Left lung (tissue), 14 donors: ENCODE measurements at regions of chrX and their contacts with region 1.

Region 1: DNA sequence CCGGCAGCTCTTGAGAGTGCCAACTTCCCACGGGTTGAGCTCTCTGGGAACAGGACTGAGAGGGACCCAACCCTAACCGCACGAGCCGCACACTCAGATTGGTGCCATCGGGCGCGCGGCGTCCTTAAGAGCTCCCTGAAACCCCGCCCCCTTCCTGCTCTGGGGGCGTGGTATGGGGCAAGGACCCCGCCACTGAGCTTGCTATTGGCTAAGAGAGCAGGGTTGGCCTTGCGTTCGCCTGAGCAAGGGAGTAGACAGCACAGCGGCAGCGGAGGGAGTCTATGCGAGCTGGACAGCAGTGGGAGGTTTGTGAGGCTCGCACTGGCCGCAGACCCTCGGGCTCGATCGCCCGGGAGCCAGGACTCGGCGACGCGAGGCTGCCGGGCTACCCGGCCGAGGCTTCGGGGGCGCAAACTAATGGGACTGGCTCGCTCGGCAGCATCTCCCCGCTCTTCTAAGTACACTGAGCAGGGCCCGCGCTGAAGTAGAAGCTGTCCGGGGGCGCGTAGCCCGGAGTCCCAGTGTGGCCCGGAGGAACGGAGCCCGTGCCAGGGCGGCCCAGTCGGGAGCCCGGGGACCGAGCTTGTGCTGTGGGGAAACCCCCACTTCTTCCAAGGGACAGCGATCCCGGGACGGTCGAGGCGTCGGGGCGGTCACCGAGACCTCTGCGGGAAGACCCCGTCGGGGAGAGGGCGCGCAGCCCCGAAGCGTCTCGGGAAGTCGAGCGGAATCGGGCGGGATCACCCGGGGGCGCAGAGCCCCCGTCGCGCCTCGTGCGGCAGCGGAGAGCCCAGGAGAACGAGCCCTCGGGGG is at the start of gene EFNB1:
- DNase-seq: peak; percentile 85 to 95 (median 92)
- ATAC-seq: peak; percentile 92
- H3K4me3 ChIP-seq: peak within 1 kb of the TSS; percentile 54 to 67
- H3K27ac ChIP-seq: peak within 1 kb of the TSS; percentile 53 to 76
- H3K4me1 ChIP-seq: peaks cover 0 to 13% of the 10 kb centered on the region in 2 donors
- H3K27me3 ChIP-seq: peaks cover 0 to 17% of the 10 kb centered on the region in 2 donors
- CTCF ChIP-seq: no peak
- polyA plus RNA-seq, gene EFNB1: 50.0 to 69.9 (median 63.1) TPM

Region 2: DNA sequence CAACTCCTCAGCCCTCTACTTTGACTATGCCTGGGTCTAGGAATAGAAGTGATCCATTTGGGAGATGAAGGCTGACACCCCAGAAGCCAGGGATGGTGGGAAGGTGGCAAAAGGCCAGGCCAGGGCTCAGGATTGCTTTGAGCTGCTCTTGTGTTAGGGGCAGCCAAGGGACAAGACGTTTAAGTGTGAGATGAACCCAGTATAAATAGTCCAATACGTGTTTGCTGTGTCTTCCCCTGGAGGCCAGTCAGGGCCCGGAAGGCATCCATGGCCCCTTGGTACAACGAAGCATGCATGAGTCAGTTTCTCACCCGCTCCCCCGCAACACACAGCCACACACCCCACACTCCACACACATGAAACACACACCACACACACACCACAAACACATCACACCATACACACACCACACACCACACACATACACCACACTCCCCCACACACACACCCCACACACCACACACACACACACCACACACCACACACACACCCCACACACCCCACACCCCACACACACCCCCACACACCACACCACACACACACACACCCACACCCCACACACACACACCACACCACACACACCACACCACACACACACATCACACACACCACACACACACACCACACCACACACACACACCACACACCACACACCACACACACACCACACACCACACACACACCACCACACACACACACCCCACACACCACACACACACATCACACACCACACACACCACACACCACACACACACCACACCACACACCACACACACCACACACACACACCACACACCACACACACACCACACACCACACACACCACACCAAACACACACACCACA is 176.4 kb before region 1 on chrX:
- intact Hi-C with region 1: no loop called
- DNase-seq: peak in 1 of 4 donors; percentile 54
- ATAC-seq: no peak
- H3K4me3 ChIP-seq: no peak overlapping the region
- H3K27ac ChIP-seq: no peak overlapping the region
- H3K4me1 ChIP-seq: no peaks in the 10 kb centered on the region
- H3K27me3 ChIP-seq: peaks cover 0 to 5% of the 10 kb centered on the region in 2 donors
- CTCF ChIP-seq: no peak

Region 3: DNA sequence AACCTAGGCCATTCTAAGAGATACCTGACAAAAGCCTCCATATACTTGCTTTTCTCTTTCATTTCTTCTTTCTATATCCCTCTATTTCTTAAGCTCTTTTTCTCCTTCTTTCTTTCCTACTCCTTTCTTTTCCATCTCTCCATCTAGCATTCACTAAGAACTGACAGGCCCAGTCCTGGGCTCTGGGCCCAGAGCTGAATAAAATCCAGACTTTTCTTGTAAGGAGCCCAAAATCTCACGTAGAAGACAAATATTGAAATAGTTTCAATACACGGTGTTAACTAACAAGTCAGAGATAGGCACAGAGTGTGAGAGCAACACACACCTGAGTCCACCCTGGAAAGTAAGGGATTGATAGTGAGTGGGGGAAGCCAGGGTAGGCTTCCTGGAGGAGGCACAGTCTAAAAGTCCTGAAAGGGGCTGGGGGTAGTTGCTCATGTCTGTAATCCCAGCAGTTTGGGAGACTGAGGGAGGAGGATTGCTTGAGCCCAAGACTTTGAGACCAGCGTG is 73.3 kb before region 1 on chrX:
- intact Hi-C with region 1: no loop called
- DNase-seq: no peak
- ATAC-seq: no peak
- H3K4me3 ChIP-seq: no peak overlapping the region
- H3K27ac ChIP-seq: no peak overlapping the region
- H3K4me1 ChIP-seq: no peaks in the 10 kb centered on the region
- H3K27me3 ChIP-seq: no peaks in the 10 kb centered on the region
- CTCF ChIP-seq: no peak

Region 4: DNA sequence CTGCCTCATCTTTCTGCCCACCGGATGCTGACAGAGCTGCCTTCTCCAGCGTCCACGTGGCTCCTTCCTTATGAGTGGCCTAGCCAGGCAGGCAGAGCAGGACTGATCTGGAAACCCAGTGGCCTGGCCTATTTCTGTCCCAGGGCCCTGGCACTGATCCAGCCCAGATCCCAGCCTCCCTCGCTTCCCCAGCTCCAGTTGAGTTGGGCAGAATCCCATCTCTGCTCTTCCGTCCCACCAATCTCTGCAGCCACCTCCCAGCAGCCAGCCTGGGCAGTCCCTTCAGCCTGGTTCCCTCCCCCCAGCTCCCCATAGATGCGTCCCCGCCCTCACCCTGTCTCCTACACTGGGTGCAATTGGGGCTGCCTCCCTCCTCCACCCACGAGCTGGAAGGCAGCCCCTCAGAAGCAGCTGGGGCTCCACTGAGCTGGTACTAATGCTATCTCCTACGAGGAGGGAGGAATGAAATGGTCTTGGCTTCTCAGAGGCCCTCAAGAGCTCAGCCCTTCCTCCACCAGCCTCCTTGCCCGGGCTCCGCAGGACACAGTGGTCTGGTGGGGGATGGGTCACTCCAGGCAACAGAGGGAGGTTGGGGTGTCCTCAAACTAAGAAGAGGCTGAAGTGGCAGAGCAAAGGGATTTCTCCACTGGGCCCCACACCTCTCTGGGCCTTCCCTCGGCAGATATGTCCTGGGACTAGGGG is 242.2 kb after region 1 on chrX:
- intact Hi-C with region 1: no loop called
- DNase-seq: peak in 1 of 4 donors; percentile 70
- ATAC-seq: peak; percentile 18
- H3K4me3 ChIP-seq: no peak overlapping the region
- H3K27ac ChIP-seq: no peak overlapping the region
- H3K4me1 ChIP-seq: no peaks in the 10 kb centered on the region
- H3K27me3 ChIP-seq: no peaks in the 10 kb centered on the region
- CTCF ChIP-seq: no peak

Region 5: DNA sequence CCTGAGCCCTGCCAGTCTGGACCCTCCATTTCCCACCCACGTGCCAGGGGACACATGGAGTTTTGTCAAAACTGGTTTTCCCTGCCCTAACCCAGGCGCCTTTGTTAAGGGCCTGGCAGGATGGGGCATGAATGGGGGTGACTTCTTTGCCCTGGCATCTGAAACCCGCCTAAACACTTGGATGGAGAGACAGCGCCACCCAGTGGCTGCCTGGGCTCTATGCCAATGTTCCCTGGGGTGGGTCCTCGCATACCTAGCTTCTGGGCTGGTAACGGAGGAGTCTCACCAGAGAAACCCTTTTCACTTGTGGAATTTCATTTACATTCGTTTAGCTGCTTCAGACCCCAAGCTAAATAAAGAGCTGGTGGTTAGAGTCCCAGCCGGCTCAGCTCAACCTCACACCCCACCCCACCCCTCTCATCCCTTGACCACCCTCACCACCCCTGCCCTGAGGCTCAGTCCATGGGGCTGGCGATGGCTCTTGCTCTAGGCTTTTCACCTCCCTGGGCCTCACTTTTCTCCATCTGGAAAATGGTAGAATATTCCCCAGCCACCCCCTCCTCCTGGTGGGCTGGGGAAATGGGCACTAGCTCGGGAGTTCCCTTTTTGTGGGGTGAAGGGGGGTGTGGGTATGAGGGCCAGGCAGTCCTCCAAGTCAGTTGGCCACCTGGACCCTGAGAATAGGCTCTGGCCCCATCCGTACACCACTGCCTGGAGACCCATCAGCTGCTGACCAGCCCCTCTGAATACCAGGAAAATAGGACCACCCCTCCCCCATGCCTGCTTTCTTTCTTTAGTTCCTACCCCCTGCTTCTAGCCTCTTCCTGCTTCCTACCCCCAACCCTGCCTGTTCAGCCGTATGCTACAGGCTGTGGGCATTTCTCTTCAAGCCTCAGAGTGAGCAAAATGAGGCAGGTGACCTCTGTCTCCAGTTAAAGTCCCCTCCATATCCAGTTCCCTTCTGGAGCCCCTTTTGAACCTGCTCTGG is 393.5 kb after region 1 on chrX:
- intact Hi-C with region 1: loop called in 1 of 2 experiments (anchors 10 kb)
- DNase-seq: peak; percentile 42 to 78 (median 71)
- ATAC-seq: peak; percentile 89
- H3K4me3 ChIP-seq: no peak overlapping the region
- H3K27ac ChIP-seq: no peak overlapping the region
- H3K4me1 ChIP-seq: no peaks in the 10 kb centered on the region
- H3K27me3 ChIP-seq: peaks cover 0 to 10% of the 10 kb centered on the region in 2 donors
- CTCF ChIP-seq: peak; percentile 59 to 67

Region 6: GRCh38 chrX:69285881-69286564 is 457.1 kb after region 1 on chrX:
- intact Hi-C with region 1: loop called in 1 of 2 experiments (anchors 10 kb)
- DNase-seq: peak; percentile 55 to 85 (median 80)
- ATAC-seq: peak; percentile 85
- H3K4me3 ChIP-seq: peak overlapping the region in 1 of 2 donors; percentile 14
- H3K27ac ChIP-seq: no peak overlapping the region
- H3K4me1 ChIP-seq: peaks cover 3% of the 10 kb centered on the region in 2 donors
- H3K27me3 ChIP-seq: no peaks in the 10 kb centered on the region
- CTCF ChIP-seq: peak; percentile 78 to 89

Region 7: DNA sequence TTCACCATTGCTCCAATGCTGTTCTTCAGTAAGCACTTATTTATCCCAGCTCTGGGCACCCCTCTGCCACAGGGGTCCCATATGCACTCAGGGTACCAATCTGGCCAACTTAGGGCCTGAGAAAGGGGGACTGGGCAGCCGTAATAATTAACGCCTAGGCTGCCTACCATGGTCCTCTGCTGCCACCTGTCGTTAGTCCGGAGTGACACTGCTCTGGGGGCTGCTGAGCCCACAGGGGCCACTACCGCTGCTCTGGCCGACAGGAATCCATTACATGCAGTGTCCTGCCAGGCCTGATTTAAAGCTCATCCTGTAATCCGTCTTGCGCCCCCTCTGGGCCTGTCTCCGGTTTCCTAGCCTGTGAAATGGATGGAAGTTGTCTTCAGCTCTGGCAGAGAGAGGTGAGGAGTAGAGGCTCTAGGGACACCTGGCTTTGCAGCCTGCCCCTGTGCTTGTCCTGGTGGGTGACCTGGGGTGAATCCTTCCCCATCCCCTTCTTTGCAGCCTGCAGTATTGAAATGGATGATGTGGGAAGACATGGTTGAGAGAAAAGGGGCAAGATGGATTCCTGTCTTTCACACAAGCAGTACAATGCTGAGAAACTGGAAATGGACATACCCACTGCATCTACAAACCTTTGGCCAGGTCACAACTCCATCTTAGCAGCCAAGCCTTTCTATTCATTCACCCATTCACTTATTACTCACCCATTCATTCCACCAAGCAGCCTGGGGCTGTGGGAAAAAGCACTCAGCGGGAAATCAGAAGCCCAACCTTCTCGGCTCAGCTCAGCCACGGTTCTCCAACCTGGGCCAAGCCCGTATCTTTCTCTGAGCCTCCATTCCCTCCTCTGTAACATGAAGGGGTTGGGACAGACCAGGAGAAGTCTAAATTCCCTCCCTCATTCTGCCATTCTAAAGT is 558.9 kb after region 1 on chrX:
- intact Hi-C with region 1: loop called in 1 of 2 experiments (anchors 10 kb)
- DNase-seq: peak in 3 of 4 donors; percentile 37 to 67 (median 49)
- ATAC-seq: peak; percentile 84
- H3K4me3 ChIP-seq: no peak overlapping the region
- H3K27ac ChIP-seq: no peak overlapping the region
- H3K4me1 ChIP-seq: no peaks in the 10 kb centered on the region
- H3K27me3 ChIP-seq: no peaks in the 10 kb centered on the region
- CTCF ChIP-seq: peak; percentile 51 to 75